ENCODE measurements at regions of chr2 and their contacts with region 1.

Region 1: GRCh38 chr2:11583840-11584524 is 50.1 kb downstream of the GREB1 start:
- DNase-seq: peak; percentile 87
- H3K4me3 ChIP-seq: no peak overlapping the region
- H3K27ac ChIP-seq: no peak overlapping the region
- H3K4me1 ChIP-seq: no peaks in the 10 kb centered on the region
- H3K27me3 ChIP-seq: no peaks in the 10 kb centered on the region
- CTCF ChIP-seq: peak; percentile 81 to 82
- POLR2A ChIP-seq: no peak

Region 2: GRCh38 chr2:10832203-10832936 is 751.6 kb before region 1 on chr2:
- CTCF ChIA-PET with region 1: interaction called, 70 read pairs
- POLR2A ChIA-PET with region 1: no interaction called
- dilution Hi-C with region 1: no loop called
- intact Hi-C with region 1: loop called (anchors 1 kb)
- DNase-seq: peak; percentile 79
- H3K4me3 ChIP-seq: no peak overlapping the region
- H3K27ac ChIP-seq: no peak overlapping the region
- H3K4me1 ChIP-seq: peaks cover 11% of the 10 kb centered on the region
- H3K27me3 ChIP-seq: peaks cover 0 to 3% of the 10 kb centered on the region in 2 experiments
- CTCF ChIP-seq: peak; percentile 93 to 98
- POLR2A ChIP-seq: no peak

Region 3: DNA sequence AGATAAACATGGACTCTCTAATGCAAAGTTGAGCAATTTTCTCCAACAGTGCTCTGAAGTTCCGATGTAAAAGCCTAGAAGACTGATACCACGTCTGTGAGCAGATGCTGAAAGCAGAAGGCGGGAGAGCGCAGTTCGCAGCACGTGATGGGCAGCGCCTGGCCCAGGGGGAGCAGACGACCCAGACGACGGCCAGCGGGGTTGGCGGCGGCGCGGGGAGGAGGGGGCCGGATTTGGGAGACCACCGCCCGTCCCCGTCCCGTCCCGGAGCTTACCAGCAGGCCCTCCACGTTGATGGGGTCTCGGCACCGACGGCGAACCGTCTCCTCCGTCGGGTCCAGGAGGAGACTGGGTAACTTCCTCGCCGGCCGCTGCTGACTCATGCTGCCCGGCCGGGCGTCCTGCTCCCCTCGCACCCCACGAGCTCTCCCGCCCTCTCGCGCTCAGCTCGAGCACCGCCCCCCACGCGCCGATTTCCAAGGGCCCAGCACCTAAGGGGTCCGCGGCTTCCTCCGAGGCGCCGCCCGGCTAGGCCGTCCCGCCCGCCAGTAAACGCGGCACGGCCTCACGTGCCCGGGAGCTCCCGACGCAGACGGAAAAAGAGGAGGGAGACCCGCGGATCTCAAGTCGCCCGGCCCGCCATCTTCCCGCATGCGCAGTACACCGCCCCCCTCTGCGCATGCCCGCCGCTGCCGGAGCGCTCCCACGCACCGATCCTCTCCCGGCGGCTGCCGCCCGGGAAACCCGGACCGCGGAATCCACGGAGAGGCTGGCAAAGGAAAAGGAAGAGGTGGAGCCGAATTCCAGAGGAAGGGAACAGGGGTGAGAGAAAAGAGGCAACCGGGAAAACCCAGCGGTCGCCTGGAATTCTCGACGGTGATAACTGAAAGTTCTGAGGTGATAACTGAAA is 118.2 kb before region 1 on chr2 and contains the start of gene E2F6:
- CTCF ChIA-PET with region 1: interaction called, 19 read pairs
- POLR2A ChIA-PET with region 1: no interaction called
- dilution Hi-C with region 1: no loop called
- intact Hi-C with region 1: no loop called
- DNase-seq: peak; percentile 93
- H3K4me3 ChIP-seq: peak within 1 kb of the TSS; percentile 45 to 82 (median 46)
- H3K27ac ChIP-seq: peak within 1 kb of the TSS; percentile 73
- H3K4me1 ChIP-seq: peaks cover 21% of the 10 kb centered on the region
- H3K27me3 ChIP-seq: no peaks in the 10 kb centered on the region
- CTCF ChIP-seq: no peak
- POLR2A ChIP-seq: no peak
- total RNA-seq, gene E2F6: 14.6 and 15.7 TPM in 2 replicates

Region 4: DNA sequence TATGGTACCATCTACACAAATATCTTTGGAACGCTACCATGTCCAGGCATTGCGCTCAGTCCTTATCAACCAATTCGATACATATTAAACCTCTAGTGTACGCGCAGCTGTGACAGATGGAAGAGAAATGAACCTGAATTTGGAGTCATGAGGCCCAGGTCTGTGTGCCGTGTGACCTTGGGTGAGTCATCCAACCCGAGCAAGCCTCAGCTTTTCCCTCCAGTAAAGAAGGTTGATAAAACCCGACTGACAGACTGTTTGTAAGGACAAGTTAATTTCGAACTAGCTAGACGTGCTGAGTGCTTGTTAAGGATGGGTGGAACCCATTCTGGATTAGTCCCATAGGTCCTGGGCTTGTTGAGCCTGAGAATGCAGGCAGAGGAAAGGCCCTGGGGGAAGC is 22.0 kb before region 1 on chr2:
- CTCF ChIA-PET with region 1: interaction called, 34 read pairs
- POLR2A ChIA-PET with region 1: no interaction called
- dilution Hi-C with region 1: no loop called
- intact Hi-C with region 1: no loop called
- DNase-seq: no peak
- H3K4me3 ChIP-seq: no peak overlapping the region
- H3K27ac ChIP-seq: no peak overlapping the region
- H3K4me1 ChIP-seq: no peaks in the 10 kb centered on the region
- H3K27me3 ChIP-seq: peaks cover 0 to 7% of the 10 kb centered on the region in 2 experiments
- CTCF ChIP-seq: no peak
- POLR2A ChIP-seq: no peak

Region 5: DNA sequence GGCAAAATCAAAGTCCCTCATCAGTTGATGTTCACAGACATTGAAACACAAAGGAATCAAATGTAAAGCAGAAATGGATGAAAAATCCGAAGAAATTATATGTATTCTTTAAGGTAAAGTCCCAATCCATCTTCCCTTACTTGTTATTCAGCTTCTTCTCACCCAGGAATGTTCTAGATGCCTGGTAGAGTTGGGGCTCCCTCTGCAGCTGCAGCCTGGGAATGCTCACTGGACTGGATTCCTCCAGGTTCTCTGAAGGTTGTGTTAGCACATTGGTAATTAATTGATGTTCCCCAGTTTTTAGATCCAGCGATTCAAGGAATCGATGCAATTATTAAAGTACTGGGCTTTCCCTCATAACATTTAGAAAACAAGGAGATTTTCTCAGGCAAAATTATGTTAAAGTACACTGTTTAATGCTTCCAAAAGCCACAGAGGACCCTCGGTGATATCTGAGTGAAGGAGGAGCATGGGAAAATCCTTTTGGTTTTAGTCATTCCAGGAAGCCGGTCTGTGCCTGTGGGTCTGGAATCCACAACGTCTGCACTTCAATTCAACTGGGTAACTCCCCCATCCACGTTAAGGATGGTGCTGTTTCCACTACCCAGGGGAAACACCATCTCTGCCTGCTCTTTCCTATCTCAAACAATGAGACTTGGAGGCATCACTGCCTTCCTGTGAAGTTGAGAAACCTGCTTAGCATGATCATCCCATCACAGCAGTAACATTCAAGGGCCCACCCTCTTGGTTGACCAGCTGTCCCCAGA is 64.0 kb after region 1 on chr2:
- CTCF ChIA-PET with region 1: interaction called, 13 read pairs
- POLR2A ChIA-PET with region 1: no interaction called
- dilution Hi-C with region 1: no loop called
- intact Hi-C with region 1: loop called (anchors 1 kb)
- DNase-seq: peak; percentile 39
- H3K4me3 ChIP-seq: no peak overlapping the region
- H3K27ac ChIP-seq: no peak overlapping the region
- H3K4me1 ChIP-seq: no peaks in the 10 kb centered on the region
- H3K27me3 ChIP-seq: peaks cover 2 to 4% of the 10 kb centered on the region in 2 experiments
- CTCF ChIP-seq: peak; percentile 12 to 52
- POLR2A ChIP-seq: no peak

Measured in endothelial cell of umbilical vein (primary cell).